ENCODE measurements at regions of chr5 and their contacts with region 1.

Region 1: GRCh38 chr5:93092349-93093105 is 488.5 kb downstream of the NR2F1-AS1 start:
- DNase-seq: no peak
- ATAC-seq: no peak

Region 2: DNA sequence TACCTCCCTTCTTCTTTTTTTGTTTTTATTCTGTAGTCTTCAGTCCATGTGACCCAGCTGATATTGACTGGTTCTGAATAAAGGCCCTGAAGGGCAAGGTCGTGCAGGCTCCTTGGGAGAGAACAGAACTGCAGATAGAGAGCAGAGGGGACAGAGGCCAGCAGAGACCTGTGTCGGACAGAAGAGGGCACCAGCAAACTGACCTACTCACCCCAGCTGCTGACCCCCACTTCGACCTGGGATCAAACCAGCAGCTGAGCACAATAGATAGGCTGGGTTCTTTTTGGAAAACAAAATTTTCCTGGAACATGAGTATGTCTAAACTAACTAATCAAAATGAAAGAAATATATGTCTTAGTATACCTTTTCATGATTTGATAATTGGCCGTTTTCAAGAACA is 206.6 kb before region 1 on chr5:
- intact Hi-C with region 1: no loop called
- DNase-seq: peak; percentile 62
- ATAC-seq: no peak

Region 3: DNA sequence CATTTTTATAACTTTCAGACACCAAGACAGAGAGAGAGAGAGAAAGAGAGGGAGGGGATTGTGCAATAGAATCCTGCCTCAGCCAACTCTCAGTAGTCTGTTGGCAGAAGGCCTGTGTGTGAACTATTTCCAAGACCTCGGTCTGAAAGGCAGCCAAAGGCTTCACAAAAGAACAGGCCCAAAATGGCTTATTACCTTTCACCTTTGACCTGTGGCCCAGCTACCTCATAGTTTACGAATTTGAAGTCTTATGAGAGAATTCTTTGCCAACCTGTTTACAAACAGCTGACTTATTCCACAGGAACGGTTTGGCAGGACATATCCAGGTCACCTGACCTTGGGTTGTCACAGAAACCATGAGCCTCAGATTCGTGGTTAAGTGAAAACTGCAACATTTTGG is 439.8 kb after region 1 on chr5:
- intact Hi-C with region 1: loop called (anchors 10 kb)
- DNase-seq: peak; percentile 43
- ATAC-seq: peak; percentile 84

Region 4: DNA sequence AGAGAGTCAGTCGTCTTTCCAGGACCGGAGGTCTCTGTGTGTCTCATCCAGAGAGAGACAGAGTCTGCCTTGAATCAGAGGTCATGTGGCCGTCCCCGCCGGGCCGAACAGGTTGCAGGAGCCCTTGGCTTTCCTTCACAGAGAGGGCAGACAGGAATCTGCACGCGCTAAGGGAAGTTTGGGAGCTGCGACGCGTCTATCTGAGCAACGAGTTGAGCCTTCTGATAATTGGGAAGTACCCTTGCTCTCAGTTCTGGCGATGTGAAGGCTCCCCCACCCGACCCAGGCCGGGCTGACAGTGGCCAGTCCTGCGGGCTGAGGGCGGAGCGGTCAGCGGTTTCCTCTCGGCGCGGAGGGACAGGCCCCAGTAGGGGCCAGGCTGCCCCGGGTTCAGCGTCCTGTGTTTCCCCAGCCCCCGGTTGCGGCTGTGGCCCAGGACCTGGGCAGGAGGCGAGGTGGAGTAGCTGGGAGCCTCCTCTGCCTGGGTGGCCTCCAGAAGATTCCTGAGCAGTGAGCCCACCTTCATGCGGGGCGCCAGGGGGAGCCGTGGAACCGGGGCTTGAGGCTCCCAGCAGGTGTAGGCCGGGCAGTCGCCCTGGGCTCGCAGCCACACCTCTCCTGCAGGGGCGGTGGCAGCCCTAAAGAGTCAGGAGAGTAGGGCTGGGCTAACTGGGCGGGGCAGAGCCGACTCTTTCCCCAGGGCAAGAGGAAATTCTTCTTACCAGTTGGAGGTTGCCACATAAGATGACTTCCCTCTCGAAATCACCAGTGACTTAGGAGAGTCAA is 504.3 kb after region 1 on chr5:
- intact Hi-C with region 1: loop called (anchors 10 kb)
- DNase-seq: peak; percentile 67
- ATAC-seq: peak; percentile 27

Measured in Right ventricle myocardium inferior (tissue), 1 donor.